Psoas muscle (tissue), 8 donors: ENCODE measurements at regions of chr3 and their contacts with region 1.

Region 1: DNA sequence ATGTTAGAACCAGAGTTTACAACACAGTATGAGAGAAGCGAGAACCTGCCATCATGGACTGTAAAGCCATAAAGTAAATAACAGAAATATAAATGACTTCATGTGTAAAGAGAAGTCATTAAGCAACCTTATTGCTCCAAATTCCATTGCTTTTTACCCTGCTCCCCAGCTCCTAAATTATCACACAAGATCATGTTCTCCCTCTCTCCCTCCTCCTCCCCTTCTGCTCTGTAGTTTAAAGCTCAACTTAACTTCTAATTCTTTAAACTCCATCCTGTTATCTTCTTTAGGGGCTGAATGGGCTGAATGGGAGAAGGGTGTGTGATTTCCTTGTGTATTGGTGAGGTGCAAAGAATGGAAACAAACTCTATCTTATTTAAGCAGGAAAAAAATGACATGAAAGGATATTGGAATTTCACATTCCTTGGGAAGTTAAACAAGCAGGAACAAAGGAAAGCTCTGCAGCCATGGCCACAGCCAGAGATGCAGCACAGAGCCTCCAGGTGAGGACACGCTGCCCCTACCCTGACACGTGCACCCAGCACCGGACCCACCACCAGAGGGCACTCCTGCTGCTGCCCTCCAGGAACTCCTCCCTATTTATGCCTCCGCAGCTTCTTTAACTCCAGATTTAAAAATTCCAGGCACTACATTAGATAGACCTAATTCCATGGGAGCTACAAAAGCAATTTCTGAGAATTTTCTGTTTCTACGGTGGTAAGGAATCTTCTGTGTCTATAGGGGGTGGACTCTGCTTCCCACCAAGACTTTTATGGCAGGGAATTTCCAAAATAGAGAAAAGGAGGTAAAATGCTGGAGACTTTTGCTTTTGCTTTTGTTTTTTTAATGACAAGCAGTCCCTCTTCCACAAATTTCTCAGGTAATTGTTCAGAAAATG is 76.9 kb upstream of the ABI3BP start:
- DNase-seq: peak; percentile 56 to 70
- ATAC-seq: peak; percentile 77 to 89 (median 85)
- H3K4me3 ChIP-seq: no peak overlapping the region
- H3K27ac ChIP-seq: no peak overlapping the region
- H3K4me1 ChIP-seq: no peaks in the 10 kb centered on the region
- H3K27me3 ChIP-seq: no peaks in the 10 kb centered on the region
- CTCF ChIP-seq: peak; percentile 82

Region 2: DNA sequence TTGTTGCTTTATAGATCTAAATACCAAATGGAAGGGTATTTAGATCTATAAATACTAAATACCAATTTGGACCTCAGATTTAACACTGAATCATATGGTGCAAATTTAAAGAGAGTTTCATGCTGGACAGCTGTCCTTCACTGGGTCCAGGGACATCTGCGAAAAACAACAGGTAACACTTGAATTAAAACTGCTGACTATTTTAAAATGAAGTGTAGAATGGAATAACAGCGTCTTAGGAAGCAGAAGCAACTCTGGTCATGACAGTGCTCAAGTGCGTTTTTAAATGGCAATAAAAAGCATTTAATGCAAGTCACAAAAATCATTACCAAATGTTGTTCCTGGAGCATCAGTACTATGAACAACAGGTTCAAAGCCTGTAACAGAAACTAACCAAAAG is 254.6 kb before region 1 on chr3:
- intact Hi-C with region 1: no loop called
- DNase-seq: no peak
- ATAC-seq: no peak
- H3K4me3 ChIP-seq: no peak overlapping the region
- H3K27ac ChIP-seq: no peak overlapping the region
- H3K4me1 ChIP-seq: no peaks in the 10 kb centered on the region
- H3K27me3 ChIP-seq: no peaks in the 10 kb centered on the region
- CTCF ChIP-seq: no peak

Region 3: DNA sequence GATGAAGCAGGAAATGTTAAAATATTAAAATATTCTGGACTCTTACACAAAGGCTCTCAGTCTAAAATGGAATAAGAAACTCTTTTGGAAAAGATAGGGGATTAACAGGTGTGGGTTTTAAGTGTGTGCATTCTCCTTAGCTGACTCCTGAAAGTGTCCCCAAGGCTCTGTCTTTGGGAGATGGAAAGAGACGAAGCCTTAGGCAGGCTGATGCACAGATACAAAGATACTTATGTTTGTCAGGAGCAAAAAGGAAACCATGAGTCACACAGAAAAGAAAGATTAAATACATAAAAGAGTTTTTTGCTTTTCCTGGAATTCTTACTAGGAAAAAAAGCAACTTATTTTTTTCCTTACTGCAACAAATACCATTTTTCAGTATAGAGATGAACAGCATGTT is 53.1 kb before region 1 on chr3:
- intact Hi-C with region 1: no loop called
- DNase-seq: no peak
- ATAC-seq: no peak
- H3K4me3 ChIP-seq: no peak overlapping the region
- H3K27ac ChIP-seq: no peak overlapping the region
- H3K4me1 ChIP-seq: no peaks in the 10 kb centered on the region
- H3K27me3 ChIP-seq: no peaks in the 10 kb centered on the region
- CTCF ChIP-seq: no peak

Region 4: DNA sequence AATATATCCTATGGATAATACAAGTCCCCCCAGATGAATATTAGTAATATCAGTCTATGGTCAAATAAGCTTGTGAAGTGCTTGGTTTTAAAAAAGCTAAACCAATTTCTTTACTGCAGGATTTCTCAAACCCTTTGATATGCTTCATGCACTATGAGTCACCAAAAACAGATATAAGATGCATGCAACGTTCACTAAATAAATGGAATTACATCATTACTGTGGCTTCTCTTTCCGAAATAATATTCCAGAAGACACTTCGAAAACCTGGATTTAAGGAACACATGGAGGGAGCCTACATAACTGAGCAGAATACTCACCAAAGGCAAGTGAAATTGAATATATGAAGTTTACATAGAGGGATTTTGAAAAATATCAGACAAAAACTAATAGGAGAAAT is 49.4 kb after region 1 on chr3:
- intact Hi-C with region 1: no loop called
- DNase-seq: no peak
- ATAC-seq: no peak
- H3K4me3 ChIP-seq: no peak overlapping the region
- H3K27ac ChIP-seq: no peak overlapping the region
- H3K4me1 ChIP-seq: no peaks in the 10 kb centered on the region
- H3K27me3 ChIP-seq: no peaks in the 10 kb centered on the region
- CTCF ChIP-seq: no peak

Region 5: GRCh38 chr3:101195951-101196713 is 126.0 kb after region 1 on chr3:
- intact Hi-C with region 1: loop called (anchors 2 to 10 kb)
- DNase-seq: no peak
- ATAC-seq: peak; percentile 36 to 73 (median 52)
- H3K4me3 ChIP-seq: no peak overlapping the region
- H3K27ac ChIP-seq: no peak overlapping the region
- H3K4me1 ChIP-seq: no peaks in the 10 kb centered on the region
- H3K27me3 ChIP-seq: no peaks in the 10 kb centered on the region
- CTCF ChIP-seq: peak; percentile 58

Region 6: GRCh38 chr3:101381809-101382208 is 311.7 kb after region 1 on chr3:
- intact Hi-C with region 1: loop called (anchors 2 to 5 kb)
- DNase-seq: no peak
- ATAC-seq: peak; percentile 59 to 85 (median 74)
- H3K4me3 ChIP-seq: no peak overlapping the region
- H3K27ac ChIP-seq: no peak overlapping the region
- H3K4me1 ChIP-seq: peaks cover 10% of the 10 kb centered on the region
- H3K27me3 ChIP-seq: no peaks in the 10 kb centered on the region
- CTCF ChIP-seq: peak; percentile 58